ENCODE measurements at regions of chr5 and their contacts with region 1.

Region 1: DNA sequence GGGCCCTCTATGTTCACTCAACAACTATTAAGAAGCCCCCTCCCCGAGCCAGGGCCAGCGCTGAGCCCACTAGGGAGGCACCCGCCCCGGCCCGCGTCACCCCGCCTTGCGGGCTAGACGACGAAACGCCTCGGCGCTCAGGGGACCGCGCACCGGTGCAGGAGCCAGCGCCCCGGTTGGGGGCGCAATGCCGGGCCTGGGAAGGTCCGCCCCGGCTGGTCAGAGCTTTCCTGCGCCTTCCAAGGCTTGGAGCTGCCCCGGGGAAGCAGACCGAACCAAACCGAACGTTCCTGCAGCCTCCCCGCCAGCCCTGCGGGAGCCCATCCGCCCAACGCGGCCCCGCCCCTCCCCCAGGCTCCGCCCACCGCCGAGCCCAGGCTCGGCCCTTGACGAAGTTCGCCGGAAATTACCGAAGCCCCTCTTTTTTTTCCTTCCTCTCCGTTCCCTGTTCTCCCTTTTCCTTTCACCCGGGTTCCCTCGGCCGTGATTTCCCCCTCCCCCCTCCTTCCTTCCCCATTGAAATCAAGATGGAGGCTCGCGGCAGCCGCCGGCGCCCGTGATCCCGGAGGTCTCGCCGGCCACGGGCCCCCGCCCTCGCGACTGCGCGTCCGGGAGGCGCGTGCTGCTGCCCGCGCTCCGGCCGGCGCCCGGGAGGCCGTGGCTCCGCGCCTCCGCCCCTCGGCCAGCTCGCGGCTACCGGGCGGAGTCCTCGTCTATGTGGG is at the start of gene TRIO:
- DNase-seq: peak; percentile 96
- total RNA-seq, gene TRIO: 181 to 202 TPM

Region 2: DNA sequence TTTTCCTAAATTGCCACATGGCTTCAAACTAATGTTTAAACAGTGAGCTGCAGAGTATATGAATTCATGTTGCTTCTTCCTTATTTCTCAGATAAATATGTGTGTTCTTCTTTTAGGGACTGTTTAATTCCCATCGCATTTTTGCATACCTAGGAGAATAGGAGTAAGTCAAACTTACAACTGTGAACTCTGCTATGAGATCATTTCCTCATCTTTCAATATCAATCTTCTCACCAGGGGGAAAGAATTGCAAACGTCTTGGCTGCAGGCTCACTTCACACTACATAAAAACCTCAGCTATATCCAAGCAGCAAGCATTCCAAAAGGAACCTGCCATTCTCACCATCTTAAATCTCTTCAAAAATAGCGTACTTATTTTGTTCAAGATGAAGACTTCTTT is 469.5 kb before region 1 on chr5:
- intact Hi-C with region 1: no loop called
- DNase-seq: no peak

Region 3: GRCh38 chr5:14124027-14124426 is 19.0 kb before region 1 on chr5:
- intact Hi-C with region 1: no loop called
- DNase-seq: no peak

Region 4: DNA sequence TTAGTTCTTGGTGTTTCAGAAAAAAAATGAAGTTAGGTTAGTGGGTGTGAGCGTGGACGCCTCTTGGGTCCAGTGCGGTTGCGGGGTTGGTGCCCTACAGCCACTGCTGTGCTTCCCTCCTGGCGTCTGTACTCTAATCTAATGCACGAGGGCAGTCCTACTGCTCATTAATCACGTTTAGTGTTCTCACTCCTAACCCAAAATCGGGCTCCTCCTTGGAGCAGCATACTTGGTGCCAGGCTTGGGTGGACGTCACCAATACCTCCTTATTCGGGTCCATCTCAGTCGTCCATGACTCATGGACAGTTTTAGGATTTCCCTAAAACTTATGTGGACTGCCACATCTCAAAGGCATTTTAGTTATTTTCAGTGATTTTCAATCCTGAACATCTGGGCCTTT is 41.7 kb after region 1 on chr5:
- intact Hi-C with region 1: loop called in 1 of 2 experiments (anchors 5 kb)
- DNase-seq: no peak

Region 5: DNA sequence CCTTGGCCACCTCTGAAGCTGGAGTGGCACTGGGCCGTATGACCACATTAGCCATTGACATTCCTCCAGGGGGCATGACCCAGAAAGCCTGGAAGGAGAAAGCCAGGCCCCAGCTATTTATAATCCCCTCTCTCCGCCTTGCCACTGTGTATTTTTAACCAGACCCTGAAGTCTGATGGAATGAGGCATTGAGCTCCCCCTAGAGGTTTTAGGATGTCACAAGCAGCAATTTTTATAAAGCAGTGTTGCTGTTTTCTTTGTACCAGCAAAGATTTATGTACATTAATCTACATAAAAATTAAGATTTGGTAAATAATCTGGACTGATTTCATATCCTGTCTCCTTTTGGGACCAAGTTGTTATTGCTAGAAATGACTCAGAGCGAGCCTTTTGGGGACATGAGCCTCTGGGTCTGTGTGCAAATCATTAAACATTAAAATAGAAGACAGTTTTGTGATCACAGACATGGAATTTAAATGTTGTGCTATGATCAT is 127.3 kb after region 1 on chr5:
- intact Hi-C with region 1: loop called in 1 of 2 experiments (anchors 2 kb)
- DNase-seq: no peak

Region 6: DNA sequence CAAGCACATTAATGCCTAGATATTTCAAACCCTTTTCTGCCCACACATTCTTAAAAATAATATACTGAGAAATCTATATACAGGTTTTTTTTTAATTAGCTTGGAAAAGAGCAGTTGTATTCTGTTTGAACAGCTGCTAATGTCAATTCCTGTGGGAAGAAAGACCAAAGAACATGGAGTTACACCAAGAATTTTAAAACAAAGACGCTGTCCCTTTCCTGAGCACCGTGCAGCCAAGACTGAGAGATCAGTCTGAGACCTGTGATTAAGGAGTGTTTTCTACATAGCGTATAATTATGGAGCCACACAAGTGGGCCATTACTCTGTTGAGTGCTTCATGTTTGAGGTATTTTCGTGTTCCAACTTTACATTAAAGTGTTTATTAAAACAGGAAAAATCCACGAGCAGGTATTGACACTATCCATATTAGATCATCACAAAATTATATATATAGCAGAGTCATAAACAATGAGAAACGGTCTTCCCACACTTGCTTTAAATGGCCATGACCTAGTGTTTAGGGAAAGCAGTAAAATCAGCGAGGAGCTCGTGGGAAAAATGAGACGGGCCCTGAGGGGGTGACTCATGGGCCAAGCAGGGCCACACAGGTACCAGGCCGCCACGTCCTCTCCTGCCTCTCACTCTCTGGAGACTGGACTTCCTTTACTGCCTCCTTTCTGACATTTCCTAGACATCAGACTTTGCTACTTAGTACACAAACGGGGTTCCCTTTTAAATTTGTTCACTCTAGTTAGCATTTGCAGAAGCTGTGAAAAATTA is 285.5 kb after region 1 on chr5:
- intact Hi-C with region 1: no loop called
- DNase-seq: no peak

Region 7: DNA sequence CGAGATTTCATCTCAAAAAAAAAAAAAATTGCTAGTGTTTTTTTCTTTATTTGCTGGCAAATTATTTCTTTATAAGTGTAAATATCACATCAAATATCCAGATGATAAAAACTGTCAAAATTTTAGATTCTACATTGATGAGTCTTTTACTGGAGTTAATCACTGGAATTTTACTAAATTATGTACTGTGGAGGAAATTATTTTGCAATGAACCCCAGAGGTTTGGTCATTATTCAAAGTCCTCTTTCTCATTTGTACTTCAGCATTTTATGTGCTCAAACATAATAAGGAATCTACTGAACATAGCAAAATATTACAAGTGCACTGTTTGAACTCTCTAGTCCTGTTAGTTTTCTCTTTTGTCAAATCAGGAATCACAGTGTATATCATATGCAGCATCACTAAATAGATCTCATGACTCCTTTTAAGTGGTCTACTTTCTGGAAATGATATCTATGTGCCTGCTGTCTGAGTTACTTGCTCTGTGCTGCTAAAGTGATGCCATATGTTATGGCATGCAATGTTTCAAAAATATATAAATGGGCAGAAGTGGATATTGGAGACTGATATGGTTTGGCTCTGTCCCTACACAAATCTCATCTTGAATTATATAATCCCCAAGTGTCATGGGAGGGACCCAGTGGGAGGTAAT is 456.6 kb after region 1 on chr5:
- intact Hi-C with region 1: loop called in 1 of 2 experiments (anchors 5 kb)
- DNase-seq: no peak